AG04450 (cell line): ENCODE measurements at regions of chr3 and their contacts with region 1.

Region 1: DNA sequence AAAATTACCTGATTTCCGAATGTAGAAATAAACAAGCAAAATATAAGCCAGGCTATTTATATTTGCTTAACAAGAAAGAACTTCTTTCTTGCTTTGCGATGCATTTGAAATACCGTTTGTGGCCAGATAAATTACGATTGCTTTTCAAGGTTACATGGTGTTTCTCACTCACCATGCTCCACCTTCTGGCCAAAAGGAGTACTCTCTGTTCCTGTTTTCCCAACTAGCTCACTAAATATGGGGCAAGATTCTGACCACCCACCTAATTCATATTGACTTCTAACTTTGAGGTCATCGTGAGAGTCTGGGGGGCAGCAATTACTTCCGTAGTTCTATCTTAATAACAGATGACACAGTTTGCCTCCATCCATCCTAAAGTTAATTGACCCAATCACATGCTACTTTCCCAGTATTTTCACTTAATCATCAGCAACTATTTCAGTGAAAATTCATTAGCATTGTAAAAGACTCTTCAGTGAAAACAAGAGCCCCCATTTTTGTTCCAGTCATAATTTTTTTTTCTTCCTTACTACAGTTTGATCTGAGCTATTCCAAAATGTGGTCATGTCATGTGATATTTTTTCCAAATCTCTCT is 25.9 kb downstream of the ACP3 start:
- DNase-seq: peak; percentile 24
- H3K4me3 ChIP-seq: no peak overlapping the region
- H3K27ac ChIP-seq: no peak overlapping the region
- H3K27me3 ChIP-seq: peaks cover 3% of the 10 kb centered on the region
- CTCF ChIP-seq: peak; percentile 93

Region 2: DNA sequence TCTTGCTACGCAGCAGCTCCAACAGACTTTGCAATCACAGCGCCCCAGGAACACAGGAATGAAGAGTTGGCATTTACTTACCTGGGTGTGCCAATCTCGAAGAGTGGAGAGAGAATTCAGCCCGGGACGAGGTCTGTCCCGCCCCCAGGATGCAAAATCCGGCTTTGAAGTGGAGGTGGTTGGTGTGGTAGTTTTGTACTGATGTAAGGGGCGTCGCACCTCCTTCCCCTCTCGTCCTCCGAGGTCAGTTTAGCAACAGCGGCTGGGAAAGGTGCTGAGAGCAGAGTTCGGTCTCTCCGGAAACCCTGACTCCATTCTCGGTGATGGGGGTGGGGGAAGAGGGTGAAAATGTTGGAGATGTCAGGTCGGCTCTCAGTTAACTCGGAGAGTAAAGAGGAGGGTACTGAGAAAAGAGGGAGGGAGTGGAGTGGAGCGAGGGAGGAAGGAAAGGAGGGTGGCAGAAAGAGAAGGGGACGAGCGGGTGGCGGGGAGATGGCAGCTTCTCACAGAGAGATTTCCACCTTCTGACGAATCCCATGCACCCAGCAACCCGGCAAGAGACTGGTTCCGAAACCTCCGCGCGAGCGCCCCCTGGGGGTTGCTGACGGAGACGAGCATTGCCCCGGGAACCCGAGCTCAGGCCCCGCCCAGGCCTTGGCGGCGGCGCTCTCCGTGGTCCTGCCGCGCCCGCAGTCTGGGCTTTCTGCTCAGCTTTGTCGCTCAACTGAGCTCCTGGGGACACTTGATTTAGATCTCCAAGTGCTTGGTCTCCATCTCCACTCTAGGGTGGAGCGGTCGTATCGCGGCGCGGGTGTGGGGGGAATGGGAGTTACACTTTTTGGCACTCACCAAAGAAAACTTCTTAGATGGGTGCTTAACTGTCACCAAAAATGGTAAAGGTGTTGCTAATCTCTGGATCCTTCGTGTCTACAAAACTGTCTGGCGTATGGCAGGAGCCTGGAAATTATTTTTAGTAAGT is 308.3 kb before region 1 on chr3 and contains the start of gene CPNE4:
- CTCF ChIA-PET with region 1: interaction called, 20 read pairs
- POLR2A ChIA-PET with region 1: no interaction called
- DNase-seq: peak; percentile 21
- H3K4me3 ChIP-seq: peak within 1 kb of the TSS; percentile 38; the same call in 1 of the 2 replicates
- H3K27ac ChIP-seq: no peak within 1 kb of the TSS
- H3K27me3 ChIP-seq: peaks cover 19% of the 10 kb centered on the region
- CTCF ChIP-seq: peak; percentile 85
- polyA plus RNA-seq, gene CPNE4: 0.25 TPM in 1 of 2 replicates, not detected in the other

Region 3: GRCh38 chr3:132253262-132253878 is 89.7 kb before region 1 on chr3:
- CTCF ChIA-PET with region 1: interaction called, 165 read pairs
- POLR2A ChIA-PET with region 1: no interaction called
- DNase-seq: peak; percentile 41
- H3K4me3 ChIP-seq: no peak overlapping the region
- H3K27ac ChIP-seq: no peak overlapping the region
- H3K27me3 ChIP-seq: peaks cover 2% of the 10 kb centered on the region
- CTCF ChIP-seq: peak; percentile 91

Region 4: GRCh38 chr3:132268956-132269355 is 74.2 kb before region 1 on chr3:
- CTCF ChIA-PET with region 1: interaction called, 22 read pairs
- POLR2A ChIA-PET with region 1: no interaction called
- DNase-seq: peak; percentile 4
- H3K4me3 ChIP-seq: no peak overlapping the region
- H3K27ac ChIP-seq: no peak overlapping the region
- H3K27me3 ChIP-seq: peaks cover 3% of the 10 kb centered on the region
- CTCF ChIP-seq: peak; percentile 58

Region 5: GRCh38 chr3:132311841-132312240 is 31.3 kb before region 1 on chr3:
- CTCF ChIA-PET with region 1: interaction called, 18 read pairs
- POLR2A ChIA-PET with region 1: no interaction called
- DNase-seq: no peak
- H3K4me3 ChIP-seq: no peak overlapping the region
- H3K27ac ChIP-seq: no peak overlapping the region
- H3K27me3 ChIP-seq: peaks cover 3% of the 10 kb centered on the region
- CTCF ChIP-seq: no peak

Region 6: DNA sequence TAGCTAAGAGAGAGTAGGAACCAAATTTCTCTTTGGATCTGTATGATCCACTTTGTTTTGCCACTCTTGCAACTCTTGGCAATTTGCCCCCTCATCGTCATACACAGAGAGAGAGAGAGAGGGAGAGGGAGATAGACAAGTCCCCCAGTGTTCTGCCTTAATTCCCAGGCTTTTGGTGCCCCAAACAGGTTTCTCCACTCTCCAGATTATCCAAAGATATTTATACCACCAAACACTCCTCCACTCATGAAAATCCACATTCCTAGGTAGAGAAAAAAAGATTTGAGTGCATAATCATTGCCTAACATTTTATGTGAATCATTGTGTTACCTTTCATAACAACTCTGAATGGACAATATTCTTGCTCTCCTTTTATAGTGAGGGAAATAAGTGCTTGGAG is 10.6 kb before region 1 on chr3:
- CTCF ChIA-PET with region 1: interaction called, 34 read pairs
- POLR2A ChIA-PET with region 1: no interaction called
- DNase-seq: no peak
- H3K4me3 ChIP-seq: no peak overlapping the region
- H3K27ac ChIP-seq: no peak overlapping the region
- H3K27me3 ChIP-seq: no peaks in the 10 kb centered on the region
- CTCF ChIP-seq: no peak

Region 7: GRCh38 chr3:132898141-132898540 is 555.0 kb after region 1 on chr3:
- CTCF ChIA-PET with region 1: no interaction called
- POLR2A ChIA-PET with region 1: no interaction called
- DNase-seq: no peak
- H3K4me3 ChIP-seq: no peak overlapping the region
- H3K27ac ChIP-seq: no peak overlapping the region
- H3K27me3 ChIP-seq: no peaks in the 10 kb centered on the region
- CTCF ChIP-seq: no peak